IMR-90 (cell line): ENCODE measurements at regions of chr6 and their contacts with region 1.

Region 1: GRCh38 chr6:105992315-105992961 is 93.7 kb upstream of the PRDM1 start:
- DNase-seq: peak; percentile 72
- ATAC-seq: peak; percentile 79
- H3K4me3 ChIP-seq: peak overlapping the region; percentile 72
- H3K27ac ChIP-seq: peak overlapping the region; percentile 64; the same call in 1 of the 2 replicates
- H3K4me1 ChIP-seq: peaks cover 3% of the 10 kb centered on the region
- H3K27me3 ChIP-seq: no peaks in the 10 kb centered on the region
- CTCF ChIP-seq: no peak
- POLR2A ChIP-seq: no peak; the same call in 1 of the 2 replicates
- RAD21 ChIP-seq: no peak

Region 2: GRCh38 chr6:105431226-105431625 is 561.2 kb before region 1 on chr6:
- CTCF ChIA-PET with region 1: no interaction called
- POLR2A ChIA-PET with region 1: no interaction called
- dilution Hi-C with region 1: no loop called
- in situ Hi-C with region 1: no loop called
- intact Hi-C with region 1: loop called (anchors 2 kb)
- DNase-seq: peak; percentile 68
- ATAC-seq: no peak
- H3K4me3 ChIP-seq: no peak overlapping the region
- H3K27ac ChIP-seq: no peak overlapping the region
- H3K4me1 ChIP-seq: peaks cover 23% of the 10 kb centered on the region
- H3K27me3 ChIP-seq: no peaks in the 10 kb centered on the region
- CTCF ChIP-seq: peak; percentile 70
- POLR2A ChIP-seq: no peak
- RAD21 ChIP-seq: peak; percentile 61

Region 3: DNA sequence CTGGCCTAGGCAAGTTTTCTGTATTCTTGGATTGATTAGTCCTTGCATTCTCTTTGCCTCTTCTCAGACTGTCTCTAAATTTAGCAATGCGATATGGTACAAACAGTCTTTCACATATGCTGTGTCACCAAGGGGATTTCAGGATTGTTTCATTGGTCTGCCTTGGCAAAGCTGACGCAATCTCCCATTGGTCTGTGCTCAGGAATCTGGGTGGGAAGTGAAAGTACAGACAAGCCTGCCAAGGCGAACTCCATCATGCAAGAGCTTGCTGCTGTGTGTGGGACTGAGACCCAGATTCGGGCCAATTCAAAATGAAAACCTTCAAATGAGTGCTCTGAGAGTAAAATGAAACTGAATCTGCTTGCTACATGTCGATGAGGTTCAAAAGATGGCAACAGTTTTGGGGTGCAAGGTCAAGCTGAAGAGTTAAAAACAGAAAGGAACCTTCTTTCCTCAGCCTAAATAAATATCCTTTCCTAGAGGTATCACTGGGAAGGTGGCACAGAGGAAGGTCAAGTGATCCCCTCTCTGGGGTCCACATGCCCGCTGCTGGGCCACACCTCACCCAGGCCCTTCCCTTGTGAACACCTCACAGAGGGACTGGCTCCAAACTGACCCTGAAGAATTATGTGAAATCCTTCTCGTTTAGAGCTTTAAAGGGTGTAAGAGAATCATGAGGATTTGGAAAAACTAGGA is 390.7 kb before region 1 on chr6:
- CTCF ChIA-PET with region 1: no interaction called
- POLR2A ChIA-PET with region 1: no interaction called
- dilution Hi-C with region 1: no loop called
- in situ Hi-C with region 1: loop called (anchors 10 kb)
- intact Hi-C with region 1: loop called (anchors 5 kb)
- DNase-seq: peak; percentile 100
- ATAC-seq: peak; percentile 92
- H3K4me3 ChIP-seq: peak overlapping the region; percentile 22; the same call in 1 of the 2 replicates
- H3K27ac ChIP-seq: peak overlapping the region; percentile 88
- H3K4me1 ChIP-seq: peaks cover 17% of the 10 kb centered on the region
- H3K27me3 ChIP-seq: no peaks in the 10 kb centered on the region
- CTCF ChIP-seq: no peak
- POLR2A ChIP-seq: peak; percentile 83; the same call in 1 of the 2 replicates
- RAD21 ChIP-seq: peak; percentile 31; the same call in 1 of the 2 replicates

Region 4: GRCh38 chr6:105733565-105734162 is 258.8 kb before region 1 on chr6:
- CTCF ChIA-PET with region 1: no interaction called
- POLR2A ChIA-PET with region 1: interaction called, 3 read pairs
- dilution Hi-C with region 1: no loop called
- in situ Hi-C with region 1: loop called (anchors 10 kb)
- intact Hi-C with region 1: loop called (anchors 1 kb)
- DNase-seq: peak; percentile 60
- ATAC-seq: peak; percentile 44; the same call in 1 of the 2 replicates
- H3K4me3 ChIP-seq: no peak overlapping the region
- H3K27ac ChIP-seq: no peak overlapping the region
- H3K4me1 ChIP-seq: no peaks in the 10 kb centered on the region
- H3K27me3 ChIP-seq: no peaks in the 10 kb centered on the region
- CTCF ChIP-seq: peak; percentile 65
- POLR2A ChIP-seq: no peak
- RAD21 ChIP-seq: peak; percentile 73

Region 5: DNA sequence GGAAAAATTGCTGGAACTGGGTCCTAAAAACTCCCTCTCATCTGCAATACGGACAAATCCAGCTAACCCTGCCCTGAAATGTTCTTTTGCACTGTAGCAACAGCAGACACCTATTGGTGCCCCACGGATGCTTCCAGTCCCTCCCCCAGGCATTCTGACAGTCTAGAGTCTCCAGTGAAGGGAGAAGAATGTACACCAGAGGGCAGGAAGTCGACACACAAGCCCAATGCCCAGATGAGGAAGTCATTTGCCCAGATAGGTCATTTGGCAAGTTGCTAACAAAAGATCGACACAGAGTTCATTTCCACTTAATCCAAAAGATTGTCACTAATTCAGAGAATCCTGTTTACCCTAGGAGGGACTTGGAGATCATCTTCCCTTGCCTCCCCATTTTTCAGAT is 199.3 kb before region 1 on chr6:
- CTCF ChIA-PET with region 1: no interaction called
- POLR2A ChIA-PET with region 1: no interaction called
- dilution Hi-C with region 1: no loop called
- in situ Hi-C with region 1: no loop called
- intact Hi-C with region 1: loop called (anchors 5 kb)
- DNase-seq: no peak
- ATAC-seq: no peak
- H3K4me3 ChIP-seq: no peak overlapping the region
- H3K27ac ChIP-seq: no peak overlapping the region
- H3K4me1 ChIP-seq: peaks cover 6% of the 10 kb centered on the region
- H3K27me3 ChIP-seq: no peaks in the 10 kb centered on the region
- CTCF ChIP-seq: 0 out of 2 replicates have a peak, but pooled peaks have one; percentile 6
- POLR2A ChIP-seq: no peak
- RAD21 ChIP-seq: peak; percentile 30; the same call in 1 of the 2 replicates

Region 6: DNA sequence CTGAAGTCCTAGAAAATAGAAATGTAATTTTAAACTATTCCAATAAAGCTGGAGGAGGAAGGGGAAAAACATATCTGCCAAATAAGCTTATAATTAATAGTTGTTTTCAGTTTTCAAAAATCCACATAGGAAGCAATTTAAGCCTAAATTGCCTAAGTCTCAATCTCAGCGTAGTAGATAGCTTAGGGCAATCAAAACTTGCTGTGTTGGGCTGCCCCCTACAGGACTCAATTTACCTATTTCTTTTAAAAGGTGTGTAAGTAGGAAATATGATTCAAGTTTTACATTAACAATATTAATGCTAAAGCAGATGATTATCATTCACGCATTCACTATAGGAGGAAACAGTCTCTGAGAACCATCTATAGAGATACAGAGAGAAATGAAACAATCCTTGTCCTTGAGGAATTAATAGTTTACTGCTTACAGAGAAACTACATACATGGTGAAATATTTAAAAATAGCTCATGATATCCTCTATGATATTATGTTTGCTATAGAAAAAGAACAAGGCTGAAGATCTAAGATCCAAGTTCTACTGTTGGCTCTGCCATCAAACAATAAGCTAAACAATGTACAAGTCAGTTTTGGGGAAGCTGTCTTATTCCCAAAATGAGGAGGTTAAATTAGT is 231.0 kb after region 1 on chr6:
- CTCF ChIA-PET with region 1: interaction called, 3 read pairs
- POLR2A ChIA-PET with region 1: no interaction called
- dilution Hi-C with region 1: no loop called
- in situ Hi-C with region 1: no loop called
- intact Hi-C with region 1: loop called (anchors 2 kb)
- DNase-seq: peak; percentile 79
- ATAC-seq: peak; percentile 68
- H3K4me3 ChIP-seq: no peak overlapping the region
- H3K27ac ChIP-seq: no peak overlapping the region
- H3K4me1 ChIP-seq: no peaks in the 10 kb centered on the region
- H3K27me3 ChIP-seq: no peaks in the 10 kb centered on the region
- CTCF ChIP-seq: peak; percentile 80
- POLR2A ChIP-seq: 0 out of 2 replicates have a peak, but pooled peaks have one; percentile 36
- RAD21 ChIP-seq: peak; percentile 93

Region 7: DNA sequence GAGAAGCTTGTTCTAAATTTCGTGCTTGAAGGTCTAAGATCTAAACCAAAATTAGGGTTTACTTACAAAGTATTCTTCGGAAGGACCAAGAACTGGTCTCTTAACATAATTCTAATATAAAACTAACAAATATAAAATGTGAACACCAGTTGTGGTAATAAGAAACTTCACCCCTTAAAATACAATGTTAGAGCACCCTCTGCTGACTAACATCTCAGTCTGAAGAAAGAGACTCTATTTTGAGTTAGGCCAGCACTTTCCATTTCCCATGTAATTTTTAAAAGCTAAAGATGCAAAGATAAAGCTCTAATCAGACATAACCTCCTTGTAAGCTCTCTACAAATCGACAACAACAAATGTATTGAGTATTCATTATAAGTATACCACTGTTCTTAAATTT is 308.5 kb after region 1 on chr6:
- CTCF ChIA-PET with region 1: no interaction called
- POLR2A ChIA-PET with region 1: no interaction called
- dilution Hi-C with region 1: no loop called
- in situ Hi-C with region 1: no loop called
- intact Hi-C with region 1: loop called (anchors 2 kb)
- DNase-seq: peak; percentile 65
- ATAC-seq: peak; percentile 79
- H3K4me3 ChIP-seq: no peak overlapping the region
- H3K27ac ChIP-seq: no peak overlapping the region
- H3K4me1 ChIP-seq: no peaks in the 10 kb centered on the region
- H3K27me3 ChIP-seq: no peaks in the 10 kb centered on the region
- CTCF ChIP-seq: peak; percentile 69
- POLR2A ChIP-seq: no peak
- RAD21 ChIP-seq: peak; percentile 71